ENCODE measurements at regions of chr11 and their contacts with region 1.

Region 1: DNA sequence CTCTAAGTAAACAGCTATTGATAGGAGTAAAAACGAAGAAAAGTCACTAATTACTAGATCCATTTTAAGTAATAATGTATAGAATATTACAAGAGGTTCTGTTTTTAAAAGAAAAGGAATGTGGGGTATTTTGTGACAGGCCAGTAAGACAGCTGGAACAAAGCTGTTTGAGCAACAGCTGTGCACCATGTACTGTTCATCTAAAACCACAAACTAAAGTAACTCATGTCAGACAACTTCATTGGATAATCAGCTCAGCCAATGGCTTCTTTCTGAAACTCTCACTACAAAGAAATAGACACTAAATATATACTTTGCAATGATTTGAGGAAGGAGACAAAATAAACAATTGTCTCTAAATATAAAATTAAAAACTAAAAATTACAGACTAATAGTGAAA is 16.1 kb downstream of the RRAS2 start:
- DNase-seq: peak; percentile 48
- H3K4me3 ChIP-seq: no peak overlapping the region
- H3K27ac ChIP-seq: no peak overlapping the region
- H3K27me3 ChIP-seq: no peaks in the 10 kb centered on the region
- CTCF ChIP-seq: no peak

Region 2: DNA sequence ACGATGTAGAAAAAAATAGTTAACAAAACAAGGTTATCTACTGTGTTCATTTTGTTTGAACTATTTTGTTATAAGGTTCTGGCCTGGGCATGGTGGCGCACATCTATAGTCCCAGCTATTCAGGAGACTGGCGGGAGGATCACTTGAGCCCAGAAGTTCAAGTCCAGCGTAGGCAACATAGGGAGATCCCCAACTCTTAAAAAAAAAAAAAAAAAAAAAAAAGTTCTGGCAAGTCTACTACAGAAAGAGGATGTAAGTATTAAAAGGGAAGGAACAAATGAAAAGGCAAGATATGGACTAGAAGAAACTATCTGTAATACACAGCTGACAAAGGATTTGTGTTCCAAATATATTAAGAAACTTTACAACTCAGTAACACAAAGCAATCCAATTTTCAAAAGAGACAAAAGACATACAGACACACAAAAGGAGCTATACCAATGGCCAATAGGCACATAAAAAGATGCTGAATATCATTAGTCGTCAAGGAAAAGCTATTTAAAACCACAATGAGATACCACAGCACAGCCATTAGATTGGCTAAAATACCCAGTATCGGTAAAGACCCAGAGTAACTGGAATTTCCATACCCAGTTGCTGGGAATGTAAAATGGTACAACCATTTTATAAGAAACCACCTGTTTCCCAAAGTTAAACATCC is 11.3 kb before region 1 on chr11:
- CTCF ChIA-PET with region 1: interaction called, 11 read pairs
- POLR2A ChIA-PET with region 1: no interaction called
- DNase-seq: no peak
- H3K4me3 ChIP-seq: no peak overlapping the region
- H3K27ac ChIP-seq: no peak overlapping the region
- H3K27me3 ChIP-seq: no peaks in the 10 kb centered on the region
- CTCF ChIP-seq: no peak

Region 3: GRCh38 chr11:14519917-14520746 is 177.2 kb after region 1 on chr11 and contains the start of gene PSMA1:
- CTCF ChIA-PET with region 1: no interaction called
- POLR2A ChIA-PET with region 1: no interaction called
- DNase-seq: peak; percentile 76
- H3K4me3 ChIP-seq: peak within 1 kb of the TSS; percentile 73
- H3K27ac ChIP-seq: peak within 1 kb of the TSS; percentile 92
- H3K27me3 ChIP-seq: no peaks in the 10 kb centered on the region
- CTCF ChIP-seq: no peak
- polyA plus RNA-seq, gene PSMA1: 222 and 285 TPM in 2 replicates

Measured in AG04450 (cell line).